ENCODE measurements at regions of chr3 and their contacts with region 1.

Region 1: GRCh38 chr3:3799173-3800079 is at the start of gene LRRN1:
- DNase-seq: peak; percentile 12 to 80 (median 57)
- ATAC-seq: peak; percentile 65
- H3K4me3 ChIP-seq: peak within 1 kb of the TSS; percentile 52 to 81
- H3K4me3 Mint-ChIP-seq: peak within 1 kb of the TSS; percentile 94
- H3K27ac ChIP-seq: peak within 1 kb of the TSS; percentile 62 to 76
- H3K27ac Mint-ChIP-seq: peak within 1 kb of the TSS; percentile 94
- H3K4me1 ChIP-seq: peaks cover 5% of the 10 kb centered on the region
- H3K4me1 Mint-ChIP-seq: peaks cover 25% of the 10 kb centered on the region
- H3K27me3 ChIP-seq: peaks cover 0 to 4% of the 10 kb centered on the region in 2 experiments
- H3K27me3 Mint-ChIP-seq: peaks cover 4% of the 10 kb centered on the region
- CTCF ChIP-seq: no peak
- total RNA-seq, gene LRRN1: 1.0 to 1.2 TPM

Region 2: GRCh38 chr3:3191675-3192285 is 607.6 kb before region 1 on chr3:
- CTCF ChIA-PET with region 1: no interaction called
- POLR2A ChIA-PET with region 1: interaction called, 3 read pairs
- intact Hi-C with region 1: loop called in 1 of 2 experiments (anchors 5 kb)
- DNase-seq: peak in 6 of 9 experiments; percentile 8 to 63 (median 32)
- ATAC-seq: peak; percentile 70
- H3K4me3 ChIP-seq: peak overlapping the region; percentile 9 to 31
- H3K4me3 Mint-ChIP-seq: peak overlapping the region; percentile 74
- H3K27ac ChIP-seq: peak overlapping the region; percentile 31 to 69
- H3K27ac Mint-ChIP-seq: peak overlapping the region; percentile 89
- H3K4me1 ChIP-seq: peaks cover 29% of the 10 kb centered on the region
- H3K4me1 Mint-ChIP-seq: peaks cover 49% of the 10 kb centered on the region
- H3K27me3 ChIP-seq: no peaks in the 10 kb centered on the region
- H3K27me3 Mint-ChIP-seq: no peaks in the 10 kb centered on the region
- CTCF ChIP-seq: no peak

Region 3: DNA sequence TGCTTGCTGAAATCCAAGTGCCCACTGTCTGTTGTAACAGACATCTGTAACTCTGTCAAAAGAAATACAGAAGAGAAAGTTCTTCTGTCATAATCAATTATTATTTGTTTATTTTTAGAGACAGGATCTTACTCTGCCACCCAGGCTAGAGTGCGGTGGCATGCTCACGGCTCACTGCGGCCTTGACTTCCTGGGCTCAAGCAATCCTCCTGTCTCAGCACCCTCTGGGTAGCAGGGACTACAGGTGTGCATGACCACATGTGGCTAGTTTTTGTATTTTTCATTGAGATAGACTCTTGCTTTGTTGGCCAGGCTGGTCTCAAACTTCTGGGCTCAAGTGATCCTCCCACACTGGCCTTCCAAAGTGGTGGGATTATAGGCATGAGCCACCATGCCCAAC is 326.1 kb after region 1 on chr3:
- CTCF ChIA-PET with region 1: no interaction called
- POLR2A ChIA-PET with region 1: no interaction called
- intact Hi-C with region 1: no loop called
- DNase-seq: no peak
- ATAC-seq: no peak
- H3K4me3 ChIP-seq: no peak overlapping the region
- H3K4me3 Mint-ChIP-seq: no peak overlapping the region
- H3K27ac ChIP-seq: no peak overlapping the region
- H3K27ac Mint-ChIP-seq: no peak overlapping the region
- H3K4me1 ChIP-seq: no peaks in the 10 kb centered on the region
- H3K4me1 Mint-ChIP-seq: no peaks in the 10 kb centered on the region
- H3K27me3 ChIP-seq: no peaks in the 10 kb centered on the region
- H3K27me3 Mint-ChIP-seq: no peaks in the 10 kb centered on the region
- CTCF ChIP-seq: no peak